CD14-positive monocyte (primary cell): ENCODE measurements at regions of chr13 and their contacts with region 1.

Region 1: GRCh38 chr13:45340422-45340925 is 509 bp downstream of the TPT1 start:
- DNase-seq: peak; percentile 79 to 87 (median 83)
- H3K4me3 ChIP-seq: peak overlapping the region; percentile 69 to 96 (median 89)
- H3K4me3 Mint-ChIP-seq: peak overlapping the region; percentile 98
- H3K27ac ChIP-seq: peak overlapping the region; percentile 86 to 98
- H3K27ac Mint-ChIP-seq: peak overlapping the region; percentile 98 to 100 (median 99)
- H3K4me1 ChIP-seq: peaks cover 52 to 63% of the 10 kb centered on the region in 2 donors
- H3K4me1 Mint-ChIP-seq: peaks cover 60% of the 10 kb centered on the region
- H3K27me3 ChIP-seq: no peaks in the 10 kb centered on the region
- H3K27me3 Mint-ChIP-seq: peaks cover 0 to 3% (median 0%) of the 10 kb centered on the region in 3 donors
- CTCF ChIP-seq: peak; percentile 72

Region 2: GRCh38 chr13:45370922-45371406 is 30.5 kb after region 1 on chr13:
- intact Hi-C with region 1: loop called in 1 of 2 experiments (anchors 5 kb)
- DNase-seq: peak; percentile 22 to 58 (median 55)
- H3K4me3 ChIP-seq: peak overlapping the region in 1 of 3 experiments; percentile 28
- H3K4me3 Mint-ChIP-seq: no peak overlapping the region
- H3K27ac ChIP-seq: no peak overlapping the region
- H3K27ac Mint-ChIP-seq: peak overlapping the region in 1 of 7 donors; percentile 33
- H3K4me1 ChIP-seq: peaks cover 11 to 15% of the 10 kb centered on the region in 2 donors
- H3K4me1 Mint-ChIP-seq: peaks cover 35% of the 10 kb centered on the region
- H3K27me3 ChIP-seq: no peaks in the 10 kb centered on the region
- H3K27me3 Mint-ChIP-seq: peaks cover 2 to 9% (median 7%) of the 10 kb centered on the region in 3 donors
- CTCF ChIP-seq: peak; percentile 99

Region 3: GRCh38 chr13:45417790-45418534 is 77.5 kb after region 1 on chr13 and contains the start of gene SLC25A30:
- intact Hi-C with region 1: loop called (anchors 5 kb)
- DNase-seq: peak; percentile 83 to 89 (median 87)
- H3K4me3 ChIP-seq: peak within 1 kb of the TSS; percentile 76 to 87 (median 80)
- H3K4me3 Mint-ChIP-seq: peak within 1 kb of the TSS; percentile 88 to 96
- H3K27ac ChIP-seq: peak within 1 kb of the TSS; percentile 81 to 95
- H3K27ac Mint-ChIP-seq: peak within 1 kb of the TSS; percentile 93 to 98 (median 97)
- H3K4me1 ChIP-seq: peaks cover 19 to 44% of the 10 kb centered on the region in 2 donors
- H3K4me1 Mint-ChIP-seq: peaks cover 23% of the 10 kb centered on the region
- H3K27me3 ChIP-seq: no peaks in the 10 kb centered on the region
- H3K27me3 Mint-ChIP-seq: peaks cover 0 to 3% (median 2%) of the 10 kb centered on the region in 3 donors
- CTCF ChIP-seq: no peak
- polyA plus RNA-seq, gene SLC25A30: 0.92 to 14.0 (median 2.3) TPM

Region 4: DNA sequence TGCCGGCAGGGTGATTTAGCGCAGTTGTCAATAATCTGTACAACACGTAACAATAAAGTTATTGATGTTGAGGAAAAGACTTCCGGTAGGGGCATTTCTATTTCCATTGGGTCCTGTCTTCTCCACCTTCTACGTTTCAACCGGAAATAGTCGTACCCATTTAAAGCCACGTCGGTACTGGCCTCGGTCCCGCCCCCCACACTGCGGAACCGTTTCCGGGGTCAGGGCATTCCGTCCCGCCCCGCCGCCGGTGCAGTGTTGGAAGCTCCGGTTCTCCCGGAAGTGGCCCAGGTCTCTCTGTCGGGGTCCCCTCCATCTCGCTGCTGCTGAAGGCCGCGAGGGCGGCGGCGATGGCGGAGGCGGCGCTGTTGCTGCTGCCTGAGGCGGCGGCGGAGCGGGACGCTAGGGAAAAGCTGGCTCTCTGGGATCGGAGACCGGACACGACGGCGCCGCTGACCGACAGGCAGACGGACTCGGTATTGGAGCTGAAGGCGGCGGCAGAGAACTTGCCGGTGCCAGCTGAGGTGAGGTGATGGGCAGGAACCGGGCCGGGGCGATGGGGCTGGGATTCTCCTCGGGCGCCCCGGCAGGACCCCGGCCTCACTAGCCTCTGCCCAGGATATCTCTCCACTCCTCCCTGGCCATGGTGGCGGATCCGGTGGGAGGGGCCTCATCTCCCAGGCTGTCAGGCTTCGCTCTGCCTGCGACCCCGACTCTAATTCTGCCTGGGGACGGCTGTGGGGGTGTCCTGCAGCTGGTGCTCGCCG is 124.4 kb after region 1 on chr13 and contains the start of gene COG3:
- intact Hi-C with region 1: loop called in 1 of 2 experiments (anchors 10 kb)
- DNase-seq: peak; percentile 92 to 94 (median 93)
- H3K4me3 ChIP-seq: peak within 1 kb of the TSS; percentile 64 to 100 (median 96)
- H3K4me3 Mint-ChIP-seq: peak within 1 kb of the TSS; percentile 94 to 95
- H3K27ac ChIP-seq: peak within 1 kb of the TSS; percentile 89 to 95
- H3K27ac Mint-ChIP-seq: peak within 1 kb of the TSS; percentile 88 to 97 (median 93)
- H3K4me1 ChIP-seq: peaks cover 27 to 31% of the 10 kb centered on the region in 2 donors
- H3K4me1 Mint-ChIP-seq: peaks cover 39% of the 10 kb centered on the region
- H3K27me3 ChIP-seq: no peaks in the 10 kb centered on the region
- H3K27me3 Mint-ChIP-seq: peaks cover 0 to 2% (median 0%) of the 10 kb centered on the region in 3 donors
- CTCF ChIP-seq: peak; percentile 47
- polyA plus RNA-seq, gene COG3: 12.3 to 25.3 (median 12.9) TPM

Region 5: DNA sequence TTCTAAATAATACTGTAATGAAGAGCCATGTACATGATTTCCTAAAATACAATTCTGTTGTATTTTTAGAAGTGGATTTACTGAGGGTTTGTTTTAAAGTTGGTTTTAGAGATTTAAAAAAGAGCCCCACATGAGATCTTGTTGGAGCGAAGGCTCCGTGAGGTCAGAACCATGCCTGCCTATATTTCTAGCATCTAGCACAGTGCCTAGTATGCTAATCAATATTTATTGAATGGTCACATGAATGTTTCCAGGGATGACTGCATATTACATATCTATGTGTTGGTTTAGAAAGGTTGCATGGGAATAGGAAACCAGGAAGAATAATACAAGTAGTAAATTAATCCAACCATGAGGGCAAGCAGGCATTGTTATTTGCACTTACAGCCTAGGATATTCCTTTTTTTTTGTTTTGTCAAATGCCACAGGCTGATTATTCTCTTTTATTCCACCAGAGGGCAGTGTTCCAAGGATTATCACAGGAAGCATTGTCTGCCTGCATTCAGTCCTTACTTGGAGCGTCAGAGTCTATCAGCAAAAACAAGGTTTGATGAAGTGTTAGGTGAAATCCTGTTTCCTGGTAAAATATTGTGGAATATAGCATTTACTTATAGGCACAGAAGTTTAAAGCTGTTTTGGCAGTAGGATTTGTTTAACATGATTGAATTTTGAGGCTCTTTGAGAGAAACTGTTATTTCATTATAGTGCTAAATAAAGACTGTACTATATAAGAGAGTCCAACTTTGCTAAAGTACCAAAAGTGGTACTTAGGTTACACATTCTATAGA is 171.0 kb after region 1 on chr13:
- intact Hi-C with region 1: no loop called
- DNase-seq: peak; percentile 41 to 61 (median 55)
- H3K4me3 ChIP-seq: no peak overlapping the region
- H3K4me3 Mint-ChIP-seq: no peak overlapping the region
- H3K27ac ChIP-seq: peak overlapping the region in 1 of 2 donors; percentile 40
- H3K27ac Mint-ChIP-seq: peak overlapping the region in 1 of 7 donors; percentile 39
- H3K4me1 ChIP-seq: no peaks in the 10 kb centered on the region
- H3K4me1 Mint-ChIP-seq: peaks cover 4% of the 10 kb centered on the region
- H3K27me3 ChIP-seq: no peaks in the 10 kb centered on the region
- H3K27me3 Mint-ChIP-seq: no peaks in the 10 kb centered on the region
- CTCF ChIP-seq: peak; percentile 94